Naive thymus-derived CD4-positive, alpha-beta T cell (primary cell): ENCODE measurements at regions of chr20 and their contacts with region 1.

Region 1: DNA sequence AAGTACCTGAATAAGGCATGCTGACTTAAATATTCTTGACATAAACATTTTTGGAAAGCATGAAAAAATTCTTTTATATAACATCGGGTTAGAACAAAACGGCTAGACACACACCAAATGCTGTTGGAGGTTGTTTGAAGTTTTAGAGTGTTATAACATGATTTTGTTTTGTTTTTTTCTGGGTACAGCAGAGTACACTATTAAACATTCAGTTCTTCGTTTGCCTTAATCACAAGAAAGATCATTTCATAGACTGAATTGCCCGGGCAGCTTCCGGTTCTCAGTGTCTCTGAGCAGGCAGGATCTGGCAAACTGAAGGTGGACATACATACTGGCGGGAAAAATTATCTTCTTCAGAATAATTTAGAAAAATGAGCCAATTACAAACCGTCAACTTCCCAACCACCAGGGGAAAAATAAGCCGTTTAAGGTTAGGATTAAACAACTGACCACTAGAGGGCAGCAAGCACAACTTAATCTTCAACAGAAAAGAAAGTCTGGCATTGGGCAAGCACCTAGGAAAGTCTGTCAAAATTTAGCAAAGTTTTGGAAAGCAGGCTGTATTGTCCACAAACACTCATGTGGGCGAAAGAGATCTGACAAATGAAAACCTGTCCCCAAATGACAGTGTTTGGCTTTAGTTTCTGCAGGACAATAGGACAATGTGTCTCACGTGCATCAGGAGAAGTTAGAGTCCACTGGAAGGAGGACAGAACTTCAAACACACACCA is 15.0 kb downstream of the ZNF217 start:
- DNase-seq: peak in 8 of 9 donors; percentile 44 to 85 (median 80)
- ATAC-seq: peak; percentile 85
- H3K4me3 ChIP-seq: peak overlapping the region; percentile 49
- H3K4me3 Mint-ChIP-seq: peak overlapping the region; percentile 79 to 98 (median 86)
- H3K27ac ChIP-seq: peak overlapping the region; percentile 70
- H3K27ac Mint-ChIP-seq: peak overlapping the region; percentile 83 to 98 (median 94)
- H3K4me1 ChIP-seq: peaks cover 53 to 60% of the 10 kb centered on the region in 2 donors
- H3K4me1 Mint-ChIP-seq: peaks cover 41 to 99% (median 91%) of the 10 kb centered on the region in 7 donors
- H3K27me3 ChIP-seq: no peaks in the 10 kb centered on the region
- H3K27me3 Mint-ChIP-seq: no peaks in the 10 kb centered on the region

Region 2: DNA sequence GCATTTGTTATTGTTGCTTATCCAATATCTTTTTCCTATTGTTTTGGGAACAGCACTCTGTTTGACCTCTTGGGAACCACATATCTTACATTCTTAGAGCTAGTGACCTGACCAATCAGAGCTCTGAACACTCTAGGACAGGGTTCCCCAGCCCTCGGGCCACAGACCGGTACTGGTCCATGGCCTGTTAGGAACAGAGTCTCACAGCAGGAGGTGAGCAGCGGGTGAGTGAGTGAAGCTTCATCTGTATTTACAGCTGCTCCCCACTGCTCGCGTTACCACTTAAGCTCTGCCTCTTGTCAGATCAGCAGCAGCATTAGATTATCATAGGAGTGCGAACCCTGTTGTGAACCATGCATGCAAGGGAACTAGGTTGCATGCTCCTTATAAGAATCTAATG is 832.5 kb before region 1 on chr20:
- CTCF ChIA-PET with region 1: no interaction called
- POLR2A ChIA-PET with region 1: no interaction called
- intact Hi-C with region 1: no loop called
- DNase-seq: no peak
- ATAC-seq: no peak
- H3K4me3 ChIP-seq: no peak overlapping the region
- H3K4me3 Mint-ChIP-seq: no peak overlapping the region
- H3K27ac ChIP-seq: no peak overlapping the region
- H3K27ac Mint-ChIP-seq: no peak overlapping the region
- H3K4me1 ChIP-seq: no peaks in the 10 kb centered on the region
- H3K4me1 Mint-ChIP-seq: no peaks in the 10 kb centered on the region
- H3K27me3 ChIP-seq: no peaks in the 10 kb centered on the region
- H3K27me3 Mint-ChIP-seq: peaks cover 0 to 7% (median 3%) of the 10 kb centered on the region in 5 donors

Region 3: GRCh38 chr20:53594068-53595017 is 15.7 kb after region 1 on chr20:
- CTCF ChIA-PET with region 1: interaction called, 5 read pairs
- POLR2A ChIA-PET with region 1: interaction called, 21 read pairs
- intact Hi-C with region 1: loop called (anchors 1 kb)
- DNase-seq: peak; percentile 93 to 100 (median 96)
- ATAC-seq: peak; percentile 90
- H3K4me3 ChIP-seq: peak overlapping the region; percentile 81
- H3K4me3 Mint-ChIP-seq: peak overlapping the region; percentile 89 to 99 (median 92)
- H3K27ac ChIP-seq: peak overlapping the region; percentile 97
- H3K27ac Mint-ChIP-seq: peak overlapping the region; percentile 90 to 98 (median 97)
- H3K4me1 ChIP-seq: peaks cover 14 to 21% of the 10 kb centered on the region in 2 donors
- H3K4me1 Mint-ChIP-seq: peaks cover 23 to 66% (median 54%) of the 10 kb centered on the region in 7 donors
- H3K27me3 ChIP-seq: no peaks in the 10 kb centered on the region
- H3K27me3 Mint-ChIP-seq: no peaks in the 10 kb centered on the region

Region 4: DNA sequence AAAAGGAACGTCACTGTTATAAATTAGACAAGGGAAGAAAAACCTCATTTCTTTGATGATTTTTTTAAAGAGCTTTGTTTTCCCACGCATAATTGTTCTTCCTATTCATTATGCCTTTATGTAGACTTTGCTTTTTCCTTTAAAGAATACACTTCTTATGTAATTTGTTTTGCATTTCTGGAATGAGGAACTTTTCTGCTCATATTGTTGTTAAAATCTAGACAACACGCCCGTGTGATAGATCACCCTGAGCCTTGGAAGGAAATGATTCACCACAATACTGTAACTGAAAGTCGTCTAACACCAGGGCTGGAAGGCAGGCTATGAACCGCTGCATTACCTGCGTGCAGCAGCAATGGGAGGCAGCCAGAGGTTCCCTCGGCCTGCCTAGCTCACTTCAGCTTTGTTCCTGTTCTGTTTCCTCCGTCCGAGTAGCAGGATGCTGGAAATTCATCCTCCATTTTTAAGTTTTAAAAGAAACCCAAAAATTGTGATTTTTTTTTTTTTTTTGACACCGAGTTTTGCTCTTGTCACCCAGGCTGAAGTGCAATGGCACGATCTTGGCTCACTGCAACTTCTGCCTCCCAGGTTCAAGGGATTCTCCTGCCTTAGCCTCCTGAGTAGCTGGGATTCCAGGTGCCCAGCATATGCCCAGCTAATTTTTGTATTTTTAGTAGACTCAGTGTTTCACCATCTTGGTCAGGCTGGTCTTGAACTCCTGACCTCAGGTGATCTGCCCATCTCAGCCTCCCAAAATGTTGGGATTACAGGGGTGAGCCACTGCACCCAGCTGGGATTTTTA is 64.6 kb after region 1 on chr20:
- CTCF ChIA-PET with region 1: interaction called, 5 read pairs
- POLR2A ChIA-PET with region 1: interaction called, 6 read pairs
- intact Hi-C with region 1: loop called in 1 of 2 experiments (anchors 1 kb)
- DNase-seq: peak in 8 of 9 donors; percentile 61 to 81 (median 75)
- ATAC-seq: peak; percentile 98
- H3K4me3 ChIP-seq: peak overlapping the region; percentile 56
- H3K4me3 Mint-ChIP-seq: peak overlapping the region; percentile 73 to 92 (median 85)
- H3K27ac ChIP-seq: peak overlapping the region; percentile 77
- H3K27ac Mint-ChIP-seq: peak overlapping the region; percentile 90 to 100 (median 97)
- H3K4me1 ChIP-seq: peaks cover 13 to 45% of the 10 kb centered on the region in 2 donors
- H3K4me1 Mint-ChIP-seq: peaks cover 30 to 64% (median 52%) of the 10 kb centered on the region in 7 donors
- H3K27me3 ChIP-seq: no peaks in the 10 kb centered on the region
- H3K27me3 Mint-ChIP-seq: no peaks in the 10 kb centered on the region

Region 5: GRCh38 chr20:53939572-53940359 is 361.1 kb after region 1 on chr20:
- CTCF ChIA-PET with region 1: interaction called, 6 read pairs
- POLR2A ChIA-PET with region 1: interaction called, 8 read pairs
- intact Hi-C with region 1: loop called (anchors 1 kb)
- DNase-seq: peak; percentile 35 to 62 (median 48)
- ATAC-seq: peak; percentile 82
- H3K4me3 ChIP-seq: no peak overlapping the region
- H3K4me3 Mint-ChIP-seq: peak overlapping the region in 3 of 10 donors; percentile 24 to 44 (median 30)
- H3K27ac ChIP-seq: no peak overlapping the region
- H3K27ac Mint-ChIP-seq: peak overlapping the region in 6 of 9 donors; percentile 2 to 79 (median 22)
- H3K4me1 ChIP-seq: peaks cover 15 to 24% of the 10 kb centered on the region in 2 donors
- H3K4me1 Mint-ChIP-seq: peaks cover 26 to 62% (median 44%) of the 10 kb centered on the region in 7 donors
- H3K27me3 ChIP-seq: no peaks in the 10 kb centered on the region
- H3K27me3 Mint-ChIP-seq: no peaks in the 10 kb centered on the region

Region 6: DNA sequence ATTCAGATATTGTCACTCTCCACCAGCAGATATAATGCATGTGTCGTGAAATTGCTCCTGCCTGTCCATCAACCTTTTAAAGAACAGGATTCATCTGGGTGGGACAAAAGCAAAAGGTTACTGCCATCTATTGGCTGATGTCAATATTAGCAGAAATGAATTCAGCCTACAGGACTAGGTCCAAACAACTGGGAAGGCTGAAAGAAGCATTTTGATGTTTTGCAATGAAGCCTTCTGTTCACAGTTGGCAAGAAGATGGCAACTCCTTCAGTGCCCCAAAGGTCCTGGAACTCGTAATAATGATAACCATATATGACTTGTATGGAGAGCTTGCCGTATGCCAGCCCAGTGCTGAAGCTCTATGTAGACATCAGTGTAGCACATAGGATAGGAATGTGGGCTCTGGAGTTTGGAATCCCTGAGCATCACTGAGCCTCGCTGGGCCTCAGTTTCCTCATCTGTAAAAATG is 484.2 kb after region 1 on chr20:
- CTCF ChIA-PET with region 1: no interaction called
- POLR2A ChIA-PET with region 1: no interaction called
- intact Hi-C with region 1: loop called (anchors 1 to 2 kb)
- DNase-seq: peak in 6 of 9 donors; percentile 8 to 40 (median 26)
- ATAC-seq: peak; percentile 61
- H3K4me3 ChIP-seq: no peak overlapping the region
- H3K4me3 Mint-ChIP-seq: no peak overlapping the region
- H3K27ac ChIP-seq: no peak overlapping the region
- H3K27ac Mint-ChIP-seq: no peak overlapping the region
- H3K4me1 ChIP-seq: peaks cover 0 to 9% of the 10 kb centered on the region in 2 donors
- H3K4me1 Mint-ChIP-seq: peaks cover 0 to 11% (median 7%) of the 10 kb centered on the region in 7 donors
- H3K27me3 ChIP-seq: no peaks in the 10 kb centered on the region
- H3K27me3 Mint-ChIP-seq: no peaks in the 10 kb centered on the region

Region 7: DNA sequence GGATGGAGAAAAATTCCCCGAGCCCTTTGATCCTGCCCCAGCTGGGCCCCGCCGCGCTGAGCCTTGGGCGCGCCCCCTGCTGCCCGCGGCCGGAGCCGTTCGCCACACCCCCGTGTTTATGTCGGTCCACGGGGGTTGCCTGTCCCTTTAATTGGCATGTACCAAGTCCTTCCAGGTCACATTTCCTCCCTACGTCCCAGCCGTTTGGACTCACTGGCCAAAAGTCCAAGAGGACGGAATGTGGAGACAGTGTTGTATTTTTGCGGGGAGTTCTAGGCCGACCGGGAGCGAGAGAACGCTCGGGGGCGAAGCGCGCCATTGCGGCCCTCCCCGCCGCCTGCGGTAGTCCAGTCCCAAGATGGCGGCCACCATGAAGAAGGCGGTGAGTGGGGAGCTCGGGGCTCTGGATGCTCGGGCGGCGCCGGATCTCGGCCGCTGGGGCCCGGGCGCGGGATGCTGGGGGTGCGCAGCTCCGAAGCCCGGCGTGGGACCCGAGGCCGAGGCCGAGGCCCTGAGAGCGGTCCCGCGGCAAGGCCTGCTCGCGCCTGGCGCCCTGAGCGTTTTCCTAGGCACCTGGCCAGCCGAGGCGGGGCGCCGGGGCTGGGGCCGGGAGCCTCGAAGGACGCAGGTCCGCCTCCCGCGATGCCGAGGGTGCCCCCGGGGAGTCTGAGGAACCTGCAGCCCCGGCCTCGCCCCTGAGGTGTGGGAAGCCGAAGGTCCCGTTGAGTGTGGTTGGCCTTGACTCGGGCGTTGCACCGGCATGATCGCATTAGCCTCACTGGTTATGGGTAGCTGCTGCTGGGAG is 629.3 kb after region 1 on chr20 and contains the start of gene PFDN4:
- CTCF ChIA-PET with region 1: no interaction called
- POLR2A ChIA-PET with region 1: no interaction called
- intact Hi-C with region 1: loop called in 1 of 2 experiments (anchors 10 kb)
- DNase-seq: peak; percentile 69 to 85 (median 80)
- ATAC-seq: peak; percentile 95
- H3K4me3 ChIP-seq: peak within 1 kb of the TSS; percentile 65
- H3K4me3 Mint-ChIP-seq: peak within 1 kb of the TSS; percentile 75 to 98 (median 97)
- H3K27ac ChIP-seq: peak within 1 kb of the TSS; percentile 89
- H3K27ac Mint-ChIP-seq: peak within 1 kb of the TSS; percentile 99 to 100 (median 100)
- H3K4me1 ChIP-seq: peaks cover 14 to 15% of the 10 kb centered on the region in 2 donors
- H3K4me1 Mint-ChIP-seq: peaks cover 20 to 41% (median 38%) of the 10 kb centered on the region in 7 donors
- H3K27me3 ChIP-seq: no peaks in the 10 kb centered on the region
- H3K27me3 Mint-ChIP-seq: no peaks in the 10 kb centered on the region
- total RNA-seq, gene PFDN4: 14.6 to 30.4 (median 17.7) TPM

Region 8: DNA sequence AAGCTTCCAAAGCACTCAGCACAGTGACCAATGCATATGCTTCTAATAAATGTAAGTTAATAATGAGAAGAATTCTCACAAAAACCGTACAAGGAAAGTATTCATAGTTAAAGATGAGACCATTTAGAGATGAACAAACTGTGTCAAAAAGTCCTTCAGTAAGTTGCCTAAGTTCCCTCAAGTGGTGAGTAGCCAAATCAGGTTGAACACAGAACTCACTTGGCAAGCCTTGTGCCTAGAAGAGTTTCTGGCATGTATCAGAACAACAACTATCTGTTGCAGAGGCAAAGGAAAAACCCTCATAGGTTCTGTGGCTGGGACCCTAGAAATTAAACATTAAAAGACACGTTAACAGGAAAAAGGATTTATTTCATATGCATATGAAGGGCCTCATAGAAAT is 767.2 kb after region 1 on chr20:
- CTCF ChIA-PET with region 1: no interaction called
- POLR2A ChIA-PET with region 1: no interaction called
- intact Hi-C with region 1: no loop called
- DNase-seq: no peak
- ATAC-seq: no peak
- H3K4me3 ChIP-seq: no peak overlapping the region
- H3K4me3 Mint-ChIP-seq: no peak overlapping the region
- H3K27ac ChIP-seq: no peak overlapping the region
- H3K27ac Mint-ChIP-seq: no peak overlapping the region
- H3K4me1 ChIP-seq: no peaks in the 10 kb centered on the region
- H3K4me1 Mint-ChIP-seq: peaks cover 0 to 10% (median 0%) of the 10 kb centered on the region in 7 donors
- H3K27me3 ChIP-seq: no peaks in the 10 kb centered on the region
- H3K27me3 Mint-ChIP-seq: peaks cover 0 to 27% (median 24%) of the 10 kb centered on the region in 5 donors

Region 9: DNA sequence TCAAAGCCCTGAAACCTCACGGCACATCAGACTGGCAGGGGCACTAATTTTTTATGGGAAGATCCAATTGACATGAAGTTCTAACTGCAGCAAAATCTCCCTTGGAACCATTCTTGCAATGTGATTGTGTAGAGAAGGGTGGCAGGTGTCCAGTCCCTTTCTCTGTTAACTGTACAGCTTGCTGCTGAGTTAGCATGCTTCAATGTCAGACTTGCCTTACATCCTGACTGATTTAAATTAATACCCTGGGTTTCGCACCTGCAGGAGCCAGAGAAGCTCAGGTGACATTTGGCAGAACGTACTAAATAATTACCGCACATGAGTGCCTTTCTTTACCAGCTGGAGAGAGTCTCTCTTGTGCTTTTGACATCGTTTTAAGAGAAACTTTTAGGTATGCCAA is 1019.7 kb after region 1 on chr20:
- CTCF ChIA-PET with region 1: no interaction called
- POLR2A ChIA-PET with region 1: no interaction called
- intact Hi-C with region 1: no loop called
- DNase-seq: no peak
- ATAC-seq: no peak
- H3K4me3 ChIP-seq: no peak overlapping the region
- H3K4me3 Mint-ChIP-seq: no peak overlapping the region
- H3K27ac ChIP-seq: no peak overlapping the region
- H3K27ac Mint-ChIP-seq: no peak overlapping the region
- H3K4me1 ChIP-seq: no peaks in the 10 kb centered on the region
- H3K4me1 Mint-ChIP-seq: no peaks in the 10 kb centered on the region
- H3K27me3 ChIP-seq: no peaks in the 10 kb centered on the region
- H3K27me3 Mint-ChIP-seq: peaks cover 0 to 27% (median 4%) of the 10 kb centered on the region in 5 donors